Naive thymus-derived CD4-positive, alpha-beta T cell (primary cell): ENCODE measurements at regions of chr1 and their contacts with region 1.

Region 1: DNA sequence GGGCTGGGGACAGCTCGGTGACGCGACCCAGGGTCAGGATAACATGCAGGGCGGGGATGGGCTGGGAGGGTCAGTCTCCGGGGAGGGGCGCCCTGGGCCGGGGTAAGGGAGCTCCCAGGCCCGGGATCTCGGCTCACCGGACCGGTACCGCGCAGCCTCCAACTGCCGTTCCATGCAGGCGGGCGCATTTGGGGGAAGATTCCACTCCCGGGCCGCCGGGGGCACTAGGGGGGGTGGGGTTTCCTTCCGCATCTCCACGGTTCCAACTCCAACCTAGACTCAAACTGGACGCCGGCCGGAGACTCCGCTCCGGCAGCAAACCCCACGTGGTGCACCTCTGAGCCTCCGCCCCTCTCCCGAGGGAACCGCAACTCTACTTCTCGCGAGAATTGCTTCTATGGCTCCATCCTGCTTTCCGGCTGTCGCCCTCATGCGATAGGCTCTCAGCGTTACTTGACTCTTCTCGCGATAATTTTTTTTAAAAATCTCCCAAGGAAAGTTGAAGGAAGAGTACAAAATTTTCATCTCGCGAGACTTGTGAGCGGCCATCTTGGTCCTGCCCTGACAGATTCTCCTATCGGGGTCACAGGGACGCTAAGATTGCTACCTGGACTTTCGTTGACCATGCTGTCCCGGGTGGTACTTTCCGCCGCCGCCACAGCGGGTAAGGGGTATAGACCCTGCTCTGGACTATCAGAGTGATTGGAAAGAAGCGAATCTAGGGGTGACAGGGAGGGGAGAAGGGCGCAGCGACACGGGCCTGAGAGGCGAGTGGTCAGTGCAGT is at the starts of genes ATP5PB and WDR77:
- DNase-seq: peak; percentile 66 to 97 (median 94)
- ATAC-seq: peak; percentile 98
- H3K4me3 ChIP-seq: peak within 1 kb of the TSS; percentile 89
- H3K4me3 Mint-ChIP-seq: peak within 1 kb of the TSS; percentile 97 to 100 (median 100)
- H3K27ac ChIP-seq: peak within 1 kb of the TSS; percentile 98
- H3K27ac Mint-ChIP-seq: peak within 1 kb of the TSS; percentile 95 to 100 (median 99)
- H3K4me1 ChIP-seq: peaks cover 51 to 55% of the 10 kb centered on the region in 2 donors
- H3K4me1 Mint-ChIP-seq: peaks cover 43 to 92% (median 78%) of the 10 kb centered on the region in 7 donors
- H3K27me3 ChIP-seq: no peaks in the 10 kb centered on the region
- H3K27me3 Mint-ChIP-seq: no peaks in the 10 kb centered on the region
- total RNA-seq, gene ATP5PB: 64.9 to 298 (median 98.7) TPM
- total RNA-seq, gene WDR77: 20.7 to 39.9 (median 29.5) TPM

Region 2: DNA sequence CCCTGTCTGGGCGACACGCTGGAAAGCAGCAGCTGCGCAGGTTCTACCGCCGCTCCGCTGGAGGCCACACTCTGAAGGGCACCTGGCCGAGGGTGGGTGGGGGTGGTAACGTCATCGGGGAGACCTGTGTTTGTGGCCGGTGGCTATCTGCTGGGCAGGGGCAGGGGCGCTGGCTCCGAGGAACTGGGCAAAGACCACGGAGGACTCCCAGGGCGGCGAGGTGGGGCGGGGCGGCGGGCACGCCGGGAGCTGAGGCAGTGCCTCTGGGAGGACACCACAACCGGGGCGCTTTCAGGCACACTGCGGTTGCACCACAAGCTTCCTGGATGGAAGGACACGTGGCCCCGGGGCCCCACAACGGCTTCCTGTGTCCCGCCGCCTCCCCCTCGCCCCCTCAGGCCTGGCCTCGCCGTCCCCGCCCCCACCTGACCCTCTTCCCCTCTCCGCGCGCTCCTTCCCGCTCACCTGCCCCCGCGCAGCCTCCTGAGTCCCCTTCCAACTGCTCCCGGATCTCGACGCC is 245.4 kb before region 1 on chr1:
- CTCF ChIA-PET with region 1: no interaction called
- POLR2A ChIA-PET with region 1: interaction called, 3 read pairs
- intact Hi-C with region 1: loop called in 1 of 2 experiments (anchors 2 kb)
- DNase-seq: peak; percentile 51 to 86 (median 82)
- ATAC-seq: peak; percentile 71
- H3K4me3 ChIP-seq: peak overlapping the region; percentile 84
- H3K4me3 Mint-ChIP-seq: peak overlapping the region; percentile 90 to 100 (median 99)
- H3K27ac ChIP-seq: peak overlapping the region; percentile 90
- H3K27ac Mint-ChIP-seq: peak overlapping the region; percentile 80 to 99 (median 96)
- H3K4me1 ChIP-seq: peaks cover 30 to 32% of the 10 kb centered on the region in 2 donors
- H3K4me1 Mint-ChIP-seq: peaks cover 32 to 76% (median 61%) of the 10 kb centered on the region in 7 donors
- H3K27me3 ChIP-seq: no peaks in the 10 kb centered on the region
- H3K27me3 Mint-ChIP-seq: no peaks in the 10 kb centered on the region

Region 3: DNA sequence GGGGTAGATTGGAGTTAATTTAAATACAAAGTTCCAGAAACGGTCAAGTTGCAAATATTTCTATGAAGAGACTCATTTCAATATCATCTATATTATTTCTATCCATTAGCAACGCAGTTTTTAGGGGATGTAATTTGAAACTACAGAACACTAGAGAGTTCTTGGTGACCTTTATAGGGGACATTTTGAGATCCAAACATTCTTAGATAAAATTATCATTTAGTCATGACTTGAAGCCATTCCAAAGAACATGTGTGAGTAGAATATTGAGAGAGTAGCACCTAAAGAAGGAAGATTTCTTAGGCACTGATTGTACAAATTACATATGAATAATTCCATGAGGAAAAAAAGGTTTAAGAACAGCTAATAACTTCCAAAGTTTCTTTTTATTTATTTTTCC is 139.4 kb before region 1 on chr1:
- CTCF ChIA-PET with region 1: no interaction called
- POLR2A ChIA-PET with region 1: no interaction called
- intact Hi-C with region 1: no loop called
- DNase-seq: no peak
- ATAC-seq: no peak
- H3K4me3 ChIP-seq: no peak overlapping the region
- H3K4me3 Mint-ChIP-seq: no peak overlapping the region
- H3K27ac ChIP-seq: no peak overlapping the region
- H3K27ac Mint-ChIP-seq: no peak overlapping the region
- H3K4me1 ChIP-seq: no peaks in the 10 kb centered on the region
- H3K4me1 Mint-ChIP-seq: peaks cover 0 to 1% (median 0%) of the 10 kb centered on the region in 7 donors
- H3K27me3 ChIP-seq: no peaks in the 10 kb centered on the region
- H3K27me3 Mint-ChIP-seq: peaks cover 0 to 30% (median 0%) of the 10 kb centered on the region in 5 donors

Region 4: GRCh38 chr1:111346089-111346885 is 102.8 kb before region 1 on chr1:
- CTCF ChIA-PET with region 1: no interaction called
- POLR2A ChIA-PET with region 1: no interaction called
- intact Hi-C with region 1: loop called in 1 of 2 experiments (anchors 5 kb)
- DNase-seq: peak; percentile 74 to 94 (median 92)
- ATAC-seq: peak; percentile 94
- H3K4me3 ChIP-seq: peak overlapping the region; percentile 90
- H3K4me3 Mint-ChIP-seq: peak overlapping the region; percentile 85 to 97 (median 92)
- H3K27ac ChIP-seq: peak overlapping the region; percentile 61
- H3K27ac Mint-ChIP-seq: peak overlapping the region; percentile 38 to 97 (median 90)
- H3K4me1 ChIP-seq: peaks cover 5 to 9% of the 10 kb centered on the region in 2 donors
- H3K4me1 Mint-ChIP-seq: peaks cover 13 to 26% (median 19%) of the 10 kb centered on the region in 7 donors
- H3K27me3 ChIP-seq: no peaks in the 10 kb centered on the region
- H3K27me3 Mint-ChIP-seq: peaks cover 0 to 19% (median 0%) of the 10 kb centered on the region in 5 donors

Region 5: DNA sequence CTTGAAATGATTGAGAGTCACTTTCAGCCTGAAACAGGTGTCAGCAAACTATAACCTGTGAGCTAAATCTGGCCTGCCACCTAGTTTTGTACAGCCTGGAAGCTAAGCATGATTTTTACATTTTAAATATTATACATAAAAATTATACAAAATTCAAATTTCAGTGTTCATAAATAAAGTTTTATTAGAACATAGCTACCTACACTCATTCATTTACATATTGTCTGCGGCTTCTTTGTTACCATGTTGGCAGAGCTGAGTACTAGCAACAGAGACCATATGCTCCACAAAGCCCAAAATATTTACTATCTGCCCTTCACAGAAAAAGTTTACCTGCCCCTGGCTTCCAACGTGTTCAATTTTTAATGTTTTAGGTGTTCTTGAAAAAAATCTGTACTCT is 16.6 kb after region 1 on chr1:
- CTCF ChIA-PET with region 1: interaction called, 11 read pairs
- POLR2A ChIA-PET with region 1: interaction called, 96 read pairs
- intact Hi-C with region 1: no loop called
- DNase-seq: no peak
- ATAC-seq: no peak
- H3K4me3 ChIP-seq: no peak overlapping the region
- H3K4me3 Mint-ChIP-seq: no peak overlapping the region
- H3K27ac ChIP-seq: no peak overlapping the region
- H3K27ac Mint-ChIP-seq: peak overlapping the region in 1 of 9 donors; percentile 7
- H3K4me1 ChIP-seq: peaks cover 20 to 23% of the 10 kb centered on the region in 2 donors
- H3K4me1 Mint-ChIP-seq: peaks cover 3 to 32% (median 25%) of the 10 kb centered on the region in 7 donors
- H3K27me3 ChIP-seq: no peaks in the 10 kb centered on the region
- H3K27me3 Mint-ChIP-seq: no peaks in the 10 kb centered on the region

Region 6: DNA sequence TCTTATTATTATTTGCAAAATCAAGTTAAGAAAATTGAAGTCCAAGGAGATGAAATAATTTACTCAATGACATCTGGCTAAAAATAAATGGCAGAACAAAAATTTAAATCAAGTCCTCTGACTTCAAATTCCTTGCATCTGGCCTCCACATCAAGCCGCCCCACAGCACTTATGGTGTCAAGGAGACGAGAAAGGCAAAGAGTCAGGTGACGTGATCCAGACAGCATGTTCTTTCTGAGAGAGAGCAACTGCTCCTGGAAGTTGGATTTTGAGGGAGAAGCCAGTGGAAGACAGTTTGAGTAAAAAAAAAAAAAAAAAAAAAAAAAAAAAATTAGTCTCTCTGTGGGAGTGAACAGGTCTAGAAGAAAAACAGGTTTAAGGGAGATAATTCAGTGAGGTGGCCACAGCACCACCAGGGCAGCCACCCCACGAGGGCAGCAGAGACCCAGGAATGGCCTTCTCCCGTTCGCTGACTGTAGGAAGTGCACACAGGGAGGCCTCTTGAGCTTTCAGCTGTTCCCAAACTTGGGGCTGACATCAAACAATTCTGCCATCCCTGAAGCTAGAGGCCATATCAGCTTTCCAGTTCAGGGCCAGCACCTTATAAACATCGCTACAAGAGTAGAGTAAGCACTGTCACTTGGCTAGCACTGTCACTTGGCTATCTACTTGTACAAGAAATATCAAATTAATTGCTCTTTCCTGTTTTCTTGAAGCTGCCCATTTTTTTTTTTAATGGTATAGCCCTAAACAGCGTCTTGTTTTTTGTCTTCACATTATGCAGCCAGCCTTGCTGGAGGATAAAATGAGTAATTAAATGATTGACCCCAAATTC is 32.5 kb after region 1 on chr1:
- CTCF ChIA-PET with region 1: interaction called, 4 read pairs
- POLR2A ChIA-PET with region 1: interaction called, 96 read pairs
- intact Hi-C with region 1: loop called in 1 of 2 experiments (anchors 1 kb)
- DNase-seq: peak; percentile 23 to 65 (median 54)
- ATAC-seq: peak; percentile 80
- H3K4me3 ChIP-seq: no peak overlapping the region
- H3K4me3 Mint-ChIP-seq: peak overlapping the region in 1 of 10 donors; percentile 20
- H3K27ac ChIP-seq: no peak overlapping the region
- H3K27ac Mint-ChIP-seq: peak overlapping the region in 4 of 9 donors; percentile 22 to 86 (median 56)
- H3K4me1 ChIP-seq: peaks cover 22 to 25% of the 10 kb centered on the region in 2 donors
- H3K4me1 Mint-ChIP-seq: peaks cover 32 to 68% (median 53%) of the 10 kb centered on the region in 7 donors
- H3K27me3 ChIP-seq: no peaks in the 10 kb centered on the region
- H3K27me3 Mint-ChIP-seq: peaks cover 0 to 25% (median 0%) of the 10 kb centered on the region in 5 donors

Region 7: DNA sequence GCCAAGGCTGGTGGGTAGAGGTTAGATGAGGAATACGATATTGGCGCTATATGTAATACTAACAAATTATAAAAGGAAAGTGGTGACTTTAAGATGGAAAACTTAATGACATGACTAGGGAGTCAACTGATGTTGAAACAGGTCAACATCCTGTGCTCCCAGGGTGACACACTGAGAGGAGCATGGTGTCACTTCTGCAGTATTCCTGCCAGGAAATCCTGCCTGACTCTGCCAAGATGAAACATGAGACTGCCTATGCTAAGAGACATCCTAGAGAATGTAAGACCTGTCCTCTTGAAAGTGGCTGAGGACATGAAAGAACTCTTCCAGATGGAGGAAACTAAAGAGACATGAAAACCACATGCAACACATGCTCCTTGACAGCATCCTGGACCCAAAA is 605.4 kb after region 1 on chr1:
- CTCF ChIA-PET with region 1: no interaction called
- POLR2A ChIA-PET with region 1: no interaction called
- intact Hi-C with region 1: no loop called
- DNase-seq: no peak
- ATAC-seq: no peak
- H3K4me3 ChIP-seq: no peak overlapping the region
- H3K4me3 Mint-ChIP-seq: no peak overlapping the region
- H3K27ac ChIP-seq: no peak overlapping the region
- H3K27ac Mint-ChIP-seq: no peak overlapping the region
- H3K4me1 ChIP-seq: no peaks in the 10 kb centered on the region
- H3K4me1 Mint-ChIP-seq: no peaks in the 10 kb centered on the region
- H3K27me3 ChIP-seq: no peaks in the 10 kb centered on the region
- H3K27me3 Mint-ChIP-seq: peaks cover 2 to 33% (median 19%) of the 10 kb centered on the region in 5 donors